ENCODE measurements at regions of chr5 and their contacts with region 1.

Region 1: GRCh38 chr5:154368041-154368800 is 77.6 kb upstream of the SAP30L start:
- DNase-seq: peak; percentile 86
- H3K4me3 ChIP-seq: peak overlapping the region in 1 of 3 experiments; percentile 59
- H3K27ac ChIP-seq: peak overlapping the region; percentile 97
- H3K4me1 ChIP-seq: peaks cover 52% of the 10 kb centered on the region
- H3K27me3 ChIP-seq: no peaks in the 10 kb centered on the region
- CTCF ChIP-seq: no peak
- POLR2A ChIP-seq: no peak

Region 2: GRCh38 chr5:154189819-154190594 is 178.2 kb before region 1 on chr5:
- CTCF ChIA-PET with region 1: interaction called, 7 read pairs
- POLR2A ChIA-PET with region 1: no interaction called
- dilution Hi-C with region 1: no loop called
- intact Hi-C with region 1: loop called (anchors 1 kb)
- DNase-seq: peak; percentile 55
- H3K4me3 ChIP-seq: peak overlapping the region; percentile 51 to 80 (median 56)
- H3K27ac ChIP-seq: peak overlapping the region; percentile 61
- H3K4me1 ChIP-seq: peaks cover 19% of the 10 kb centered on the region
- H3K27me3 ChIP-seq: no peaks in the 10 kb centered on the region
- CTCF ChIP-seq: peak; percentile 49 to 69
- POLR2A ChIP-seq: peak; percentile 56

Region 3: DNA sequence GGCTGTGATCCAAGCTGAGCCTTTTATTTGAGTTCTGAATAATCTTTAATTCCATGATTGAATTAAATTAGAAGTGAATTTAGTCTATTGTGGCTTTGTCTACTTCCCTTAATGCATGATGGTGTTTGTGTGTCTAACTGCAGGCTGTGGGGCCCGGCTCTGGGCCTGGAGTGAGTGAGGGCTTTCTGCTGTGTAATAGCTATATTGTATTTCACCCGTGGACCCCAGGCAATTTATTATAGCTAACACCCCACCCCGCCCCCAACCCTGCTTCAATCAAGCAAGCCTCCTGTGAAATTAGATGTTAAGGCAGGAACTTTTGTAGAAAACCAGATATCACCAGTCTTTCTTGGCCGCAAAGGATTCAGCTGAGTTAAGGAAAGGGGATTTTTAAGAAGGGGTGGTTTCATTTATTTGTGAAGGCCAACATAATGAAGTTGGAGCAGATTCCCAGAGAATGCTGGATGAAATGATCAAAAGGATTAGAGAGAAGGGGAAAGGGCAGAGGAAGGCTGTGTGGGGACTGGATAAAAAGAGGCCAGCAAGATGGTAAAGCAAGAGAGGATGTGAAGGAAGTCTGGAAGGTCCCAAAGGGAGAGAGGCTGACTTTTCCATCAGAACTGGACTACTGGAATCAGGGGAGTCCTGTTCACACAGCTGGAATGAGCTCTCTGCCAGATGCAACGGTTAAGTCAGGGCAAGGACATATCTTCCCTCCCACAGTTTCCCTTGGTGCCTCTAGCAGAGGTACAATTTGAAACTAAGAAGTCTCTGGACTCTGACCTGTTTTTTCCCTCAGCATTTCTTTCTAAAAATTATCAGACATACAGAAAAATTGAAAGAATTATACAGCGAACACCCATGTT is 47.8 kb before region 1 on chr5:
- CTCF ChIA-PET with region 1: interaction called, 5 read pairs
- POLR2A ChIA-PET with region 1: interaction called, 12 read pairs
- dilution Hi-C with region 1: no loop called
- intact Hi-C with region 1: no loop called
- DNase-seq: no peak
- H3K4me3 ChIP-seq: no peak overlapping the region
- H3K27ac ChIP-seq: no peak overlapping the region
- H3K4me1 ChIP-seq: no peaks in the 10 kb centered on the region
- H3K27me3 ChIP-seq: no peaks in the 10 kb centered on the region
- CTCF ChIP-seq: no peak
- POLR2A ChIP-seq: no peak

Region 4: DNA sequence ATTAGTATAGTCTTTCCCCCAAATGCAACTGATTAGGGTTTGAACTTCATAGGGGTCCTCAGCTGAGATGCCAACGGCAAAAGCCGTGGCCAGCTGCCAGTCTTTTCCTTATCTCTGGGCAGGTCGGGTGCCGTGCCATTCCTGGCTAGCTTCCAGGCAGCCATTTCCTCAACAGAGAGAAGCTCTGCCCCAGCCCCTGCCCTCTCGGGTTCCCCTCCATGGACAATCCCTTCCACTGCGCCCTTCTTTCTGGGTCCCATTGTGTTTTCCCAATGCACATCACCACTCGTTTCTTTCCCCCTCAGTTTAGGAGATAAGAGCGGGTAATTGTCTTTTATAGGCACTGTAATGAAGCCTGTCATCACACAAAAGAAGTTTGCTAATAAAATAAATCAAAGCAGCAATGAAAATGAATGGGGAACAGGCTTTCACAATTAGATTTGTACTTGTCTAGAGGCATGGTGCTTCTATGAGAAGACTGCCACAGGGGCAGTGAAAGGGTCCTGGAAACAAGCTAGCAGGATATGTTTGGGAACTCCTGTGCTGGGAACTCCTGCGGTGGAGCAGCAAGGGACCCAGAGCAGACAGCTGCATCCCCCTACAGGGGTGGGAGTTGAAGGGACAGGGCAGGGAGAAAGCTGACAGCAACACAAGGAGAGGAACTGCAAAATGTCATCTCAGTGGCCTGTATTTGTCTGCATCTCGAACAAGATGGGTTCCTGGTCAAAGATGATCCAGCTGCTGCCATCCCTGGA is 29.6 kb after region 1 on chr5:
- CTCF ChIA-PET with region 1: interaction called, 10 read pairs
- POLR2A ChIA-PET with region 1: interaction called, 5 read pairs
- dilution Hi-C with region 1: no loop called
- intact Hi-C with region 1: no loop called
- DNase-seq: peak; percentile 63
- H3K4me3 ChIP-seq: no peak overlapping the region
- H3K27ac ChIP-seq: no peak overlapping the region
- H3K4me1 ChIP-seq: peaks cover 10% of the 10 kb centered on the region
- H3K27me3 ChIP-seq: no peaks in the 10 kb centered on the region
- CTCF ChIP-seq: peak in 1 of 2 donors; percentile 53
- POLR2A ChIP-seq: no peak